ENCODE measurements at regions of chr15 and their contacts with region 1.

Region 1: DNA sequence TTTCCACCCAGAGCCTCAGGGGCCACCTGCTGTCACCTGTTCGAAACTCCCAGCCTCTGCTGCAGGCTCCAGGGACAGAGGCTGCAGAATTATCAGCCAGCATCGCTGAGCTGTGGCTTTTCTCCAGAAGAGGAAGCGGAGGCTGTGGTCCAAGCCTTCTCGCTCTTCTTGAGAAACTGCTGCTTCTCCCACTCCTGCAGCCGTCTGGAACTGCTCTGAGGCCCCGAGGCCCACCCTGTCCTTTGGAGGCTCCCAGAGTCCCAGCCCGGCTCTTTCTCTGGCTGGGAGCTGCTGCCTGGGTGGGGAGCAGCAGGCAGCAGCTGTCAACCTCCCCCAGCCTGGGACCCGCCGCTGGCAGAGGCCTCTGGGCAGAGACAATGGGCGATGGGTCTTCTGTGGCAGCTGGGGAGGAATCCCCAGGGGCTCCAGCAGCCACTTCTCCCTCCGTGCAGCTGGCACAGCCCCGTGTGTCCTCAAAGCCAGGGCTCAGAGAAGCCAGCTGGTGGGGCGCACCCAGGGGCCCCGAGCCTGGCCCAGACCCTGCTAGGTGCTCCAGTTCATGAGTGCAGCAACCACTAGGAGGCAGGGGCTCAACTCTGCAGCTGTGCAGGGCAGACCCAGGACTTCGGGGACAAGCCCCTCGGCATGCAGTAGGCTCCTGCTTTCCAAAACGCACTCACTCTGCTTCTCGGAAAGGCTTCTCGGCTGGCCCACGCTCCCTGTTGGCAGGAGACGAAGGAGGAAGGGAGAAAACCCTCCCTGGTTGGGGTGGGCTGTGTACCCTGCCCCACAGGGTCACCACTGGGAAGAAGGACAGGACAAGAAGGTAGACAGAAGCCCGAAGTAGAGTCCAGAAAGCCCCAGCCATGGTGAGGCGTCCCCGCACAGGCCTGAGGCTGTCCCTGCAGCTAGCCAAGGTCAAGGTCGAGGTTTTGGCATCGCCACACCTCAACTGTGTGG is 49.9 kb upstream of the FURIN start:
- H3K4me3 Mint-ChIP-seq: peak overlapping the region; percentile 73
- H3K27ac Mint-ChIP-seq: peak overlapping the region; percentile 99
- H3K4me1 Mint-ChIP-seq: peaks cover 97% of the 10 kb centered on the region
- H3K27me3 Mint-ChIP-seq: peaks cover 2% of the 10 kb centered on the region

Region 2: GRCh38 chr15:90851114-90851513 is 32.6 kb after region 1 on chr15:
- intact Hi-C with region 1: loop called (anchors 5 kb)
- H3K4me3 Mint-ChIP-seq: no peak overlapping the region
- H3K27ac Mint-ChIP-seq: peak overlapping the region; percentile 85
- H3K4me1 Mint-ChIP-seq: peaks cover 57% of the 10 kb centered on the region
- H3K27me3 Mint-ChIP-seq: no peaks in the 10 kb centered on the region

Measured in dendritic cell treated with granulocyte-macrophage colony-stimulating factor and Interleukin-4, amounts not matched to agents 40 ng/mL and 50 ng/mL, for 4 days (primary cell).